ENCODE measurements at regions of chr7 and their contacts with region 1.

Region 1: DNA sequence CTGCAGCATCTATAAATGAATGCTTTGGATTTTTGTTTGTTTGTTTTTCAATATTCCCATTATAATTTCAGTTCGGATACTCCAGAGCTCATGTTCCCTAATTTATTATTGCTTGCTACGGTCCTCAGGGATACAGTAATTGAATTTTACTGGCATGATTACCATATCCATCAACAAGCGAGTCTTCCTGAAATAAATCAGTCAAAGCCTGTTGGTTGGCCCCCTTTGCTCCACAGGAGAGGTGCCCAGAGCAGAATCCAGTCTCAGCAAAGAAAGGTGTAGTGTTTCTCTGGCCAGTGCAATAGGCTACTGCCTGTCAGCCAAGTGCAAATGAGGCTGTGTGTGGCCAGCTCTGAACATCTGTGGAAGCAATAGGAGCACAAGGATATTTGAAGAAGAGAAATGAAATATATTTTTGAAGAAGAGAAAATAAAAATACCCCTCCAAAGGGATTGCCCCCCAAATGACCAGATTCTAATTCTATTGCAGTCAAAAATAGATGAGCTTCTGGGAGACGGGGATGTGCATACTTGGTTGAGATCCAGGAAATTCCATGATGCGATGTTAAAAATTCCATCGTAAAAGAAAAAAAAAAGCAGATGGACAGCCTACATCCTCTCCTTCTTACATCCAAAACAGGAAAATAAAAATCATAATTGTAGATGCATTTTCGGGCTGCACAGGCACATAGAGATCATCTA is 18.1 kb downstream of the TRIL start:
- DNase-seq: no peak
- H3K4me3 ChIP-seq: no peak overlapping the region
- H3K27ac ChIP-seq: no peak overlapping the region
- H3K4me1 ChIP-seq: no peaks in the 10 kb centered on the region
- H3K27me3 ChIP-seq: no peaks in the 10 kb centered on the region
- CTCF ChIP-seq: no peak
- POLR2A ChIP-seq: no peak

Region 2: DNA sequence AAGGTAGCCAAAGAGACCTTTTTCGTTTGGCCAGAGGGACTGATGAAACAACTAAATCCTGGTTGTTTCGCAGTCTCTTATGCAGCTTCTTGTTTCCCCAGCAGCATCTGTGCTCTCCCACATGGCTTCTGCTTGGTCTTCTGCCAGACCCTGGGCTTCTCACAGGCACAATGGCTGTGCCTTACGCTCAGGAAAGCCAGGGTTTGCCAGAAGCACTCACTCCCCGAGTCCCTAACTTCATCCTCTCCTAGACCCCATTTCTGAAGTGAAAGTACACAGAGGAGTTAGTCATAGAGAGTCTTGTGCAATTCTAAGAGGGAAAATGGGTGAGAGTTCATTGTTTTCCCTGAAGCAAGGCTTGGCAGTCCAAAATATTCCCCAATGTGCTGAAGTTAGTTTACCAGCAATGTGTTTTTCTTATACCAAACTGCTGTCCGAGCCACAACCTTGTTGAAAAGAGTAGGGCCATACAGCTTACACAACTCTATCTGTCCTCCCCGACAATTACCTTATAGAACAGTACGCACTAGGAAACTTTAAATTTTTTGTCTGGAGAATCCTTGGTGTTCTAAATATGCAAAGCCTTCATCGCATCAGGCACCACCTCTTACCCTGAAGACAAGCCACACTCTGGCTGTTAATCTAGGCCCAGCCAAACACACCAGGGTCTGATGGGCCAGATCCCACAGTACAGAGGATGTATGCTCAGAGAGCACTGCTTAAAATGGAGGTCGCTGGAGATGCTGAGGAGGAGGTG is 1575.5 kb before region 1 on chr7:
- intact Hi-C with region 1: no loop called
- DNase-seq: peak in 1 of 2 donors; percentile 26
- H3K4me3 ChIP-seq: peak overlapping the region; percentile 14 to 44 (median 25)
- H3K27ac ChIP-seq: peak overlapping the region; percentile 85 to 95
- H3K4me1 ChIP-seq: no peaks in the 10 kb centered on the region
- H3K27me3 ChIP-seq: no peaks in the 10 kb centered on the region
- CTCF ChIP-seq: no peak
- POLR2A ChIP-seq: no peak

Region 3: GRCh38 chr7:28865601-28866144 is 74.3 kb before region 1 on chr7:
- intact Hi-C with region 1: no loop called
- DNase-seq: no peak
- H3K4me3 ChIP-seq: no peak overlapping the region
- H3K27ac ChIP-seq: no peak overlapping the region
- H3K4me1 ChIP-seq: no peaks in the 10 kb centered on the region
- H3K27me3 ChIP-seq: no peaks in the 10 kb centered on the region
- CTCF ChIP-seq: no peak
- POLR2A ChIP-seq: no peak

Region 4: DNA sequence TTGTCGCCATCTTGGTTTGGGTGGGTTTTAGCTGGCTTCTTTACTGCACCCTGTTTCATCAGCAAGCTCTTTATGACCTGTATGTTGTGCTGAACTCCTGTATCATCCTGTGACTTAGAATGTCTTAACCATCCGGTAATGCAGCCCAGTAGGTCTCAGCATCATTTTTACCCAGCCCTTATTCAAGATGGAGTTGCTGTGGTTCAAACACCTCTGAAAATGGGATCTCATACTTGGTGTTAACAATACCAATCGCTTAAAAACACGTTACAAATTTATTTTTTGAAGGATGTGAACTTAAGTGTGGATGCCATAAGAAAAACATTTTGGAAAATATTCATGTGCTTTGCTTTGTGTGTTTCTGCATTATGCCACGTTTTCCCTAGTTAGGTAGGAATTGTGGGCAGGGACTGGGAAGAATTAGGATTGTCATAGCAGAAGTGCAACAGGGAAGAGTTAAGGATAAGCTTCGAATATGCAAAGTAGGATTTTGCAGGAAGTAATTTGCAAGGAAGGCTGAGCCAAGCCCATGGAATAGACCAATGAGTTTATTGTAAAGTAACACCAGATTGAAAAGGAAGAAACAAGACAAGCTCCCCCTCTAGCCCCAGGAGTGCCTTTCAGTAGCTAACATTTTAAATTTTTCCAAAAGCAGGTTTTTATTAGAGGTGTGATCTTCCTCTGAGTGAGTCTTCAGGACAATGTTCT is 680.0 kb after region 1 on chr7:
- intact Hi-C with region 1: loop called (anchors 5 kb)
- DNase-seq: no peak
- H3K4me3 ChIP-seq: no peak overlapping the region
- H3K27ac ChIP-seq: no peak overlapping the region
- H3K4me1 ChIP-seq: no peaks in the 10 kb centered on the region
- H3K27me3 ChIP-seq: no peaks in the 10 kb centered on the region
- CTCF ChIP-seq: no peak
- POLR2A ChIP-seq: no peak